ENCODE measurements at regions of chr9 and their contacts with region 1.

Region 1: GRCh38 chr9:36328798-36329411 is 70.7 kb upstream of the GNE start:
- DNase-seq: peak; percentile 70
- H3K4me3 Mint-ChIP-seq: no peak overlapping the region
- H3K27ac Mint-ChIP-seq: no peak overlapping the region
- H3K4me1 Mint-ChIP-seq: peaks cover 2% of the 10 kb centered on the region
- H3K27me3 Mint-ChIP-seq: no peaks in the 10 kb centered on the region

Region 2: GRCh38 chr9:35954942-35955546 is 373.9 kb before region 1 on chr9:
- CTCF ChIA-PET with region 1: interaction called, 5 read pairs
- intact Hi-C with region 1: loop called (anchors 1 kb)
- DNase-seq: peak; percentile 73
- H3K4me3 Mint-ChIP-seq: no peak overlapping the region
- H3K27ac Mint-ChIP-seq: no peak overlapping the region
- H3K4me1 Mint-ChIP-seq: no peaks in the 10 kb centered on the region
- H3K27me3 Mint-ChIP-seq: no peaks in the 10 kb centered on the region

Region 3: DNA sequence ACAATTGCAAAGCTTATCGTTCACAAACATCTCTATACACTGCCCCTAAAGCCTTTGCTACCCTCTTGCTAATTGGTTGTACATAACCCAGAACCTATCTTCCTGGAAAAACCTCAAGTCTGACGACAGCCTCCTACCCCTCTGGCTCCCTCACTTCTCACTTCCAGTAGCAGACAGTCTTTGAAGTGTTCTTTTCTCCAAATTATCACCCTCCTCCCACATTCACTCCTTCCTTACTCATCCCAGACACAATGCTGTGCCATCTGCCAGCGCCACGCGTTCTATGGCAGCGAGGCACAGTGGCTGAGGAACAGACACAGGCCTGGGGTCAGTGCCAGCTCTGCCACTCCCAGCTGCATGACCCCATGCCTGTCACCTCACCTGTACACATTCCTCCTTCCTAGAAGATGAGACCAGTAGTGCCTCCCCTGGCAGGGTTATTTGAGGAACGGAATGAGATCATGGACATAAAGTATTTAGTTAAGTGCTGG is 110.4 kb before region 1 on chr9:
- CTCF ChIA-PET with region 1: interaction called, 7 read pairs
- intact Hi-C with region 1: loop called (anchors 1 kb)
- DNase-seq: no peak
- H3K4me3 Mint-ChIP-seq: no peak overlapping the region
- H3K27ac Mint-ChIP-seq: peak overlapping the region; percentile 26
- H3K4me1 Mint-ChIP-seq: peaks cover 30% of the 10 kb centered on the region
- H3K27me3 Mint-ChIP-seq: no peaks in the 10 kb centered on the region

Region 4: DNA sequence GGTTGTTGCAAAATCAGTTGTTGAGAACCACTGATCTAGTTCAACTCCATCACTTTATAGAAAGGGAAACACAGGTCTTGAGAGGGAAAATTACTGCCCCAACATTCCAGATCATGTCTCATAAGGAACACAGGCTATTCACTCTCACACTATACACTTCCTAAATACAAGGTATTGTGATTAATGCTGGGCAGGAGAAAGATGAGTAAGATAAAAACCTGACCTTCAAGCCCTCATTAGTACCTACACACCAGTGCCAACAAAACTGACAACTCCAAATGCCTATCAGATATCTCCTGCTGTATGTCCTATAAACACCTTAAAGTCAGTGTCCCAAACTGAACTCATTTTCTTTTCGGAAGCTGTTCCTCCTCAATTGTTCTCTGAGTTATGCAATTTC is 78.8 kb before region 1 on chr9:
- CTCF ChIA-PET with region 1: interaction called, 6 read pairs
- intact Hi-C with region 1: loop called (anchors 1 kb)
- DNase-seq: no peak
- H3K4me3 Mint-ChIP-seq: no peak overlapping the region
- H3K27ac Mint-ChIP-seq: no peak overlapping the region
- H3K4me1 Mint-ChIP-seq: peaks cover 13% of the 10 kb centered on the region
- H3K27me3 Mint-ChIP-seq: no peaks in the 10 kb centered on the region

Region 5: DNA sequence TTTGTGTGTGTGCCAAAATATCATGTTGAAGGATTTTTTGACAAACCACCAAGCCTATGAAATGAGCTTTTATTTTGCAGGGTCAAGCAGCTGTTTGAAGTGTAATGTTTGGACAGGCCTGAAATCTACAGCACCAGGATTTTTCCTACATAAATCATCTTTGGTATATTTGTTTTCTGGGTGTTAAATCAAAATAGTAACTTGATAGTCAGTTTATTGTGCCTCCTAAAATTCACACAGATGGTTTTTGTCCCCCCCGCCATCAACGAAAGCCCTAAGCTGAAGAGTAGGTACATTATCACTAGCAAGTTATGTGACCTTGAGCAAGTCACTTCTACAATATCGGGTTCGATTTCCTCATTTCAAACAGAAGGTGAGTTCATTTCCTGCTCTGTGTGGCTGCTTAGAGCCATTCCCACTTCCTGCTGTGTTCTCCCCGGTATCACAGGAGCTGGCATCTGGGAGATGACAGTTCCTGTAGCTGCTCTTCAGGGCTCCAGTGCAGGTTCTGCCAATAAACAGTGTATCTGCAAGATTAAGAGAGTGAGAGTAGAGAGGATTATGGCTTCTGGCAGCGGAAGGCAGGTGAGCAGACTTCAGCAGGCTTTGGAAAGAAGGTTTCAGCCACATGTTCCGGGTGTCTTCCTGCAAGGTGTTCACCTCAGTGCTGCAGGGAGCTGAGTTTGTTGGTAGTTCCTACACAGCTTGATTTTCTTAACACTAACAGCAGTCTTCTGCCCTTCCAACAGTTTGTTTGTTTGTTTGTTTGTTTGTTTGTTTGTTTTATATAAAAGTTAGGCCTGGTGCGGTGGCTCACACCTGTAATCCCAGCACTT is 22.2 kb before region 1 on chr9:
- CTCF ChIA-PET with region 1: interaction called, 10 read pairs
- intact Hi-C with region 1: no loop called
- DNase-seq: peak; percentile 31
- H3K4me3 Mint-ChIP-seq: no peak overlapping the region
- H3K27ac Mint-ChIP-seq: no peak overlapping the region
- H3K4me1 Mint-ChIP-seq: peaks cover 11% of the 10 kb centered on the region
- H3K27me3 Mint-ChIP-seq: no peaks in the 10 kb centered on the region

Region 6: DNA sequence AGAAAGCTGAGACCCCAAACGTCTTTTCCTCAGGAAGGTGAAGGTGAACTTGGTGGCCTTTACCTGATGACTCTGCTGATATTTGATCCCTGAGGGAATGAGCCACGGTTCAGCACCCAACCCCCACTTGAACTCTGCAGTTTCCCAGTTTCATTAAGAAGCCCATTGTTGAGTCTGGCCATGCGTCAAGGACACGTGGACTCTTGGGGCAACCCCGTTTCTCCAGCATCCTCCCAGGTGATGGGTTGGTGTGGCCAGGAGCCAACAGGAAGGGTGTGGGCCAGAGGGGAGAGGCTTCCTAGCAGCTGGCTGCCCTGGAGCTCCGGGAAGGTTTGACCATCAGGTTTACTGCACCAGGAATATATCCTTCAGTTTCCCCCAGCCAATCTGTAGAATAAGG is 11.1 kb before region 1 on chr9:
- CTCF ChIA-PET with region 1: interaction called, 19 read pairs
- intact Hi-C with region 1: no loop called
- DNase-seq: no peak
- H3K4me3 Mint-ChIP-seq: no peak overlapping the region
- H3K27ac Mint-ChIP-seq: no peak overlapping the region
- H3K4me1 Mint-ChIP-seq: no peaks in the 10 kb centered on the region
- H3K27me3 Mint-ChIP-seq: no peaks in the 10 kb centered on the region

Measured in activated naive CD4-positive, alpha-beta T cell treated with anti-CD3 and anti-CD28 coated beads for 36 hours (primary cell).